Activated CD8-positive, alpha-beta memory T cell treated with anti-CD3 and anti-CD28 coated beads, Interleukin-2, amount 10 ng/mL, durations not matched to agents 7 days and 5 days (primary cell): ENCODE measurements at regions of chr3 and their contacts with region 1.

Region 1: GRCh38 chr3:143119009-143119914 is at the start of gene CHST2:
- DNase-seq: peak; percentile 77
- ATAC-seq: peak; percentile 89
- H3K4me3 Mint-ChIP-seq: peak within 1 kb of the TSS; percentile 80
- H3K27ac Mint-ChIP-seq: peak within 1 kb of the TSS; percentile 20
- H3K4me1 Mint-ChIP-seq: peaks cover 21% of the 10 kb centered on the region
- H3K27me3 Mint-ChIP-seq: peaks cover 39% of the 10 kb centered on the region
- total RNA-seq, gene CHST2: 2.9 to 16.3 TPM

Region 2: DNA sequence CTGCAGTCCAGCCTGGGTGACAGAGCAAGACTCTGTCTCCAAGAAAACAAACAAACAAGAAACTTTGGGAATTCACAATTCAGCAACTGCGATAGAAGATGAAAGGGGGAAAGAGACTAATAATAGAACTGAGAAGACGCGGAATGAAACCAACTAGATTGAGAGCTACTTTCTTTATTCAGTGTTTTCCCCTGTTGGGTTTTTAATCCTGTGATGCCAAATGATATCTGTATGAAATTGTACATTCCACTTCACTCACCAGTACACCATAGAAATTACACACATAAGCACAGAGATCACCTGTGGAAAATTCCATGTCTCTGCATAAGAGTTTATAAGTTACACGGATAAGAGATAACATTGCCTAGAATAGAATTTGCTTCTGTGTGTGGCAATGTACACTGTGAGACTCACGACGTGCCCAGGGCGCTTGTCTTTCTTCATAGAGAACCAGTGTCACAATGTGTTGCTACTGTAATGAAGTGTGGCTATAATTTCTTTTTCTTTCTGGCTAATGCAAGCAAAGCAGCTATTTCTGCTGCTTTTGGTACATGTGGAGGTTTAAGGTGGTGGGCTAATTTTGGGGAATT is 17.4 kb before region 1 on chr3:
- CTCF ChIA-PET with region 1: no interaction called
- DNase-seq: no peak
- ATAC-seq: no peak
- H3K4me3 Mint-ChIP-seq: no peak overlapping the region
- H3K27ac Mint-ChIP-seq: no peak overlapping the region
- H3K4me1 Mint-ChIP-seq: peaks cover 1% of the 10 kb centered on the region
- H3K27me3 Mint-ChIP-seq: peaks cover 22% of the 10 kb centered on the region

Region 3: DNA sequence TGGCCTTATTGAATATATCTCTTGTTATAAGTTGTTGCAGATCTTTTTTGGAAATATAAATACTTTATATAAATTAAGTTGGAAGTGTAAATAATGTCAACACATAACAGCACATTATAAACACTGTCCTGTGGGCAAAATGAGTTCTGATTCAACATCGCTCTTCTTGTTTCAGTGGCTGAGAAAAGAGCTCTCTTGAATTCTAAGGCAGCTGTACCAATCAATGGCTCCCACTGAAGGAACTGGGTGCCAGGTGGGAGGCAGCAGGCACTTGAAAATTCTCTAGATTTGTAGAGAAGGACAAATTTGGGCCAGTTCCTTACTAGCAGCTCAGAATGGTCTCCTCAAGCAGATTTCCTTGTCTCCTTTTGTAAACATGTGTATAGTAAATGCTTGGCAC is 45.9 kb after region 1 on chr3:
- CTCF ChIA-PET with region 1: interaction called, 22 read pairs
- DNase-seq: no peak
- ATAC-seq: peak; percentile 29
- H3K4me3 Mint-ChIP-seq: peak overlapping the region; percentile 48
- H3K27ac Mint-ChIP-seq: peak overlapping the region; percentile 89
- H3K4me1 Mint-ChIP-seq: peaks cover 50% of the 10 kb centered on the region
- H3K27me3 Mint-ChIP-seq: peaks cover 2% of the 10 kb centered on the region

Region 4: DNA sequence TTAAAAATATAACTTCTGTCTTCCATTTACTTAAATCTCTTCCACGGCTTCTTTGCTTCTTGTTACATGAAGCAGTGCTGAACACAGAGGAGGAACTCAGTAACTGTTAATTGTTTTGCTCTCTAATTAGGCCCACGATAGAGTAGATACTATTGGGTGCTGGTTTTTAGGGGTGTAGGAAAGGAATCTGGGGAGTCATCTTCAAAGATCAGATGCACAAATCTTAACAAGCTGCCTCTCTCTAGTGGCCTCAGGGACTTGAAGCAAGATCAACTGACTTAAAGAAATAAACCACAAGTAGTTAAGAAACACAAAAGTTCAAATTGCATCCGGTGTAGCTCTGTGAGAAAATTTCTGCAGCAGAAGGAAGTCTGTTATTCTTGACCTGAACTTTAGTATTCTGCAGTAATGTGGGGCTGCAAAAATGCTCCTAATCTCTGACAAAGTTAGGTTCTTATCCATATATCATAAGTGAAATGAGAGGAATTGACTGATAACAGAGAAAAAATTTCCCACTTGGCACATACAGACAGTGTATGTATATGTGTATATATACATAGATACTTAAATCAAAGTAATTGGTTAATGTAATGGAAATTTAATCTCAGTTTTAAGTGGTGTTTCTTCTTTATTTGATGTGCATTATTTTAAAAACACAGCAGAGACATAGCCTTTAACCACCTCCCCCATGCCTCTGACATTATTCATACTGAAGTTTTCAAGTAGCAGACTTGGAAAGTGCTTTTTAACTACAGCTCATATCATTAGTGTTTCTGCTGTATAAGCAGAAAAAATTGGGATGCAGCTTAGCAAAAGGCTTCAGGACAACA is 52.1 kb after region 1 on chr3:
- CTCF ChIA-PET with region 1: interaction called, 22 read pairs
- DNase-seq: peak; percentile 56
- ATAC-seq: peak; percentile 77
- H3K4me3 Mint-ChIP-seq: peak overlapping the region; percentile 48
- H3K27ac Mint-ChIP-seq: peak overlapping the region; percentile 97
- H3K4me1 Mint-ChIP-seq: peaks cover 48% of the 10 kb centered on the region
- H3K27me3 Mint-ChIP-seq: no peaks in the 10 kb centered on the region

Region 5: DNA sequence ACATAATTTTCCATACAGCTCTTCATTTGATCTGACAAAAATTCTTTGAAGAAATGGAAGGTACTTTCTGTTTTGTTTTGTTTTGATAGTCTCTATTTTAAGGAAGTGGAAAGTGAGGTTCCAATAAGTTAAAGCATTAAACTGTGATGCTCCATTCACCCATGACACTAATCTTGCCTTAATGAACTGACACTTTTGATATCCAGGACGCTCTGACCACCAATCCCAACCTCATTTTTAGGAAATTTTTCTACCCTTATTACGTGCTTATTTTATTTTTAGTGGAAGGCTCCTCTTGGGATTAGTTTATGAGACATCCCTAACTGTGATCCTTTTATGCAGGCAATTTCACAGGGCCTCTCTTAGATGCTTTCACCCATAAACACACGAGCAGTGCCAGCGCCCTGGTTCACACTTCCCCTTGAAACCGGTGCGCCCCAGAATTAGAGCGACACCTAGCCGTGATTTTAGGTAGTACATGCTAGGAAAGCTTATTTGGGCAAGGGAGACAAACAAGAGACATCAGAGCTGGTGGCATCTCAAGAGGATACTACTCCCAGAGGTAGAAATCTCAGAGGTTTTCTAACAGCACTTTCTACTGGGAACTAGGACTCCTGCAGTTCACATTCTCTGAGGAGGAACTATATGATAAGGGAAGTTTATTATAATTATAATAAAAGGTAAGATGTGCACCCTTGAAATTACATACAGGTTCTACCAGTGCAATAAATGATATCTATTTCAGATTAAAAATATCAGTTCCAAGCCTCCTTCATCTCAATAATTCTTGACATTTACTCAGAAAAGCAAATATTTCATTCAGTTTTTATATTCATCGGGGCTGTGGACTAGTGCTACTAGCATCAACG is 555.1 kb after region 1 on chr3:
- CTCF ChIA-PET with region 1: interaction called, 30 read pairs
- DNase-seq: peak; percentile 83
- ATAC-seq: peak; percentile 86
- H3K4me3 Mint-ChIP-seq: peak overlapping the region; percentile 31
- H3K27ac Mint-ChIP-seq: no peak overlapping the region
- H3K4me1 Mint-ChIP-seq: peaks cover 7% of the 10 kb centered on the region
- H3K27me3 Mint-ChIP-seq: no peaks in the 10 kb centered on the region